Activated B cell treated with CpG ODN at 0.5 μM for 24 hours (primary cell): ENCODE measurements at regions of chrX and their contacts with region 1.

Region 1: GRCh38 chrX:57821703-57822375 is 88.4 kb downstream of the ZXDA start:
- DNase-seq: no peak
- ATAC-seq: peak; percentile 52
- H3K4me3 Mint-ChIP-seq: no peak overlapping the region
- H3K27ac Mint-ChIP-seq: no peak overlapping the region
- H3K4me1 Mint-ChIP-seq: peaks cover 4% of the 10 kb centered on the region
- H3K27me3 Mint-ChIP-seq: no peaks in the 10 kb centered on the region
- CTCF ChIP-seq: peak; percentile 38

Region 2: GRCh38 chrX:57906790-57907189 is 85.0 kb after region 1 on chrX:
- CTCF ChIA-PET with region 1: no interaction called
- POLR2A ChIA-PET with region 1: no interaction called
- intact Hi-C with region 1: no loop called
- DNase-seq: no peak
- ATAC-seq: no peak
- H3K4me3 Mint-ChIP-seq: peak overlapping the region; percentile 28
- H3K27ac Mint-ChIP-seq: peak overlapping the region; percentile 46
- H3K4me1 Mint-ChIP-seq: peaks cover 49% of the 10 kb centered on the region
- H3K27me3 Mint-ChIP-seq: no peaks in the 10 kb centered on the region
- CTCF ChIP-seq: no peak

Region 3: DNA sequence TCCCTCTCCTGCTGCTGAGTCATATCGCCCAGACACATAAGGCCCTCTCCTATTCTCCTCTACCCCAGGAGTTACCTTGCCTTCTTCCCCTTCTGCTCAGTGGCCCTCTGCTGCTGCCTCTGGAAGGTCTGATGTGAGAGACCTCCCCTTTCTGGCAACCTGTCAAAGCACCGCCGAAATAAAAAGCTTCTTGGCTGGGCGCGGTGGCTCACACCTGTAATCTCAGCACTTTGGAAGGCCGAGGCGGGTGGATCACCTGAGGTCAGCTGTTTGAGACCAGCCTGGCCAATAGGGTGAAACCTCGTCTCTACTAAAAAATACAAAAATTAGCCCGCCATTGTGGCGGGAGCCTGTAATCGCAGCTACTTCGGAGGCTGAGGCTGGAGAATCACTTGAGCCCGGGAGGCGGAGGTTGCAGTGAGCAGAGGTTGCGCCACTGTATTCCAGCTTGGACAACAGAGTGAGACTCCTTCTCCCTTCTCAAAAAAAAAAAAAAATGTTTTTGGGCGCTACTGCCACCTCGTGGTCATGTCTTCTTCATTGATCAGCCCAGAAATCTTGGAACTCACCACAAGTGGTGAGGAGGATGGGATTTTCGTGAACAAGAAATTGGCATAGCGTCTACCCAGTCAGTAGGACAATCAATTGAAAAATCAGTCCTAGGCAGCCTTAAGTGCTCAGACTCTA is 97.1 kb after region 1 on chrX:
- CTCF ChIA-PET with region 1: interaction called, 4 read pairs
- POLR2A ChIA-PET with region 1: no interaction called
- intact Hi-C with region 1: loop called (anchors 1 kb)
- DNase-seq: no peak
- ATAC-seq: no peak
- H3K4me3 Mint-ChIP-seq: no peak overlapping the region
- H3K27ac Mint-ChIP-seq: no peak overlapping the region
- H3K4me1 Mint-ChIP-seq: peaks cover 4% of the 10 kb centered on the region
- H3K27me3 Mint-ChIP-seq: no peaks in the 10 kb centered on the region
- CTCF ChIP-seq: no peak

Region 4: DNA sequence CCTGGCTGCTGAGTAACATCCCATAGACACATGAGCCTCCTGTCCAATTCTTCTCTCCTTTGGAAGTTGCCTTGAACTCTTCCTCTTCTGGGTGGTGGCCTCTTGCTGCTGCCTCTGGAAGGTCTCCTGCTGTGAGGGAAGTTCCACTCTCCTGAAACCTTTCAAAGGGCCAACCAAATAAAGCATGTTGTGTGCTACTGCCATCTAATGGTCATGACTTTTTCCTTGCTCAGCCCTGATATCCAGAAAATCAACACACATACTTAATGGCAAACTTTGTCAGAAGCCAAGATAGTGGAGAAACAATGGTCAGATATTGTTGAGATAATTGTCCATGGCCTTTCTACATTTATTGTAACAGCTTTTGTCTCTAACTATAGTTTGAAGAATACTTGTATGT is 107.5 kb after region 1 on chrX:
- CTCF ChIA-PET with region 1: interaction called, 6 read pairs
- POLR2A ChIA-PET with region 1: no interaction called
- intact Hi-C with region 1: loop called (anchors 1 kb)
- DNase-seq: no peak
- ATAC-seq: no peak
- H3K4me3 Mint-ChIP-seq: no peak overlapping the region
- H3K27ac Mint-ChIP-seq: no peak overlapping the region
- H3K4me1 Mint-ChIP-seq: no peaks in the 10 kb centered on the region
- H3K27me3 Mint-ChIP-seq: no peaks in the 10 kb centered on the region
- CTCF ChIP-seq: no peak

Region 5: DNA sequence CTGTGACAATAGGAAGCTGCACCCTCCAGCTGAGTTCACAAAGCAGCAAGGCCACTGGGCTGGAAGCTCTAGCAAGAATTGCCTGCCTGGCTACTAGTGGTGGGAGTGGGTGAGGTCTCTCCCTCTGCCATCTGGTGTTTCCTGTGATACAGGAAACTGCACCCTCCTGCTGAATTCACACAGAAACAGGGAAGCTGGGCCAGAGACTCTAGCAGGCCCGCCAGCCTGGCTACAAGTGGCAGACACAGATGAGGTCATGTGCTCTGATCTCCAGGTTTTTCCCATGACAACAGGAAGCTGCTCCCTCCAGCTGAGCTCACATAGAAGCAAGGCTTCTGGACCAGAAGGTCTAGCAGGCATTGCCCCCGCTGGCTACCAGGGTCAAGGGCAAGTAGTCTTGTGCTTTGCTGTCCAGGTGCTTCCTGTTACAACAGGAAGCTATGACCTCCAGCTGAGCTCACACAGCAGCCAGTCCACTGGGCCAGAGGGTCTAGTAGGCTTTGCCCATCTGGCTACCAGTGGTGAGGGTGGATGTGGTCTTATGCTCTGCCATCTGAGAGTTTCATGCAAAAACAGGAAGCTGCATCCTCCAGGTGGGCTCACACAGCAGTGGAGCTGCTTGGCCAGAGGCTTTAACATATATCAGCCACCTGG is 130.0 kb after region 1 on chrX:
- CTCF ChIA-PET with region 1: no interaction called
- POLR2A ChIA-PET with region 1: no interaction called
- intact Hi-C with region 1: no loop called
- DNase-seq: no peak
- ATAC-seq: peak; percentile 78
- H3K4me3 Mint-ChIP-seq: no peak overlapping the region
- H3K27ac Mint-ChIP-seq: peak overlapping the region; percentile 61
- H3K4me1 Mint-ChIP-seq: peaks cover 23% of the 10 kb centered on the region
- H3K27me3 Mint-ChIP-seq: no peaks in the 10 kb centered on the region
- CTCF ChIP-seq: no peak

Region 6: DNA sequence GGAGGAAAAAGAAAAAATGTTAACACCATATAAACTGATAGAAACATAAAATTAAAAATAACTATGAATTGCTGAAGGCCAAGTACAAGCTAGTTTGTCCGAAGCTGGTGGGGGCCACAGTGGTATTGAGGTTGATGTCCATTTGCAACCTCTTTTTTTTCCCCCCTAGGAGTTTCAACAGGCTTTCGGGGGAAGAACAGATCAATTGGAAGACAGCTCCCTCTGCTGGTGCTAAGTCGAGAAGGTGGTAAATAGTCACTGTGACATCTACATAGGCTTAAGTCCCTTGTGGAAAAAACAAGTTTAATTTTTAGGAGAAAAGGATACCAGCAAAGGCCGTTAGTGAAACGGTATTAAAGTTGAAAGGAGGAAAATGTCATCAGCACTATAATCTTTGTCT is 204.1 kb after region 1 on chrX:
- CTCF ChIA-PET with region 1: interaction called, 45 read pairs
- POLR2A ChIA-PET with region 1: no interaction called
- intact Hi-C with region 1: loop called (anchors 1 kb)
- DNase-seq: no peak
- ATAC-seq: no peak
- H3K4me3 Mint-ChIP-seq: no peak overlapping the region
- H3K27ac Mint-ChIP-seq: no peak overlapping the region
- H3K4me1 Mint-ChIP-seq: no peaks in the 10 kb centered on the region
- H3K27me3 Mint-ChIP-seq: no peaks in the 10 kb centered on the region
- CTCF ChIP-seq: no peak